CD4-positive, alpha-beta memory T cell (primary cell): ENCODE measurements at regions of chr1 and their contacts with region 1.

Region 1: DNA sequence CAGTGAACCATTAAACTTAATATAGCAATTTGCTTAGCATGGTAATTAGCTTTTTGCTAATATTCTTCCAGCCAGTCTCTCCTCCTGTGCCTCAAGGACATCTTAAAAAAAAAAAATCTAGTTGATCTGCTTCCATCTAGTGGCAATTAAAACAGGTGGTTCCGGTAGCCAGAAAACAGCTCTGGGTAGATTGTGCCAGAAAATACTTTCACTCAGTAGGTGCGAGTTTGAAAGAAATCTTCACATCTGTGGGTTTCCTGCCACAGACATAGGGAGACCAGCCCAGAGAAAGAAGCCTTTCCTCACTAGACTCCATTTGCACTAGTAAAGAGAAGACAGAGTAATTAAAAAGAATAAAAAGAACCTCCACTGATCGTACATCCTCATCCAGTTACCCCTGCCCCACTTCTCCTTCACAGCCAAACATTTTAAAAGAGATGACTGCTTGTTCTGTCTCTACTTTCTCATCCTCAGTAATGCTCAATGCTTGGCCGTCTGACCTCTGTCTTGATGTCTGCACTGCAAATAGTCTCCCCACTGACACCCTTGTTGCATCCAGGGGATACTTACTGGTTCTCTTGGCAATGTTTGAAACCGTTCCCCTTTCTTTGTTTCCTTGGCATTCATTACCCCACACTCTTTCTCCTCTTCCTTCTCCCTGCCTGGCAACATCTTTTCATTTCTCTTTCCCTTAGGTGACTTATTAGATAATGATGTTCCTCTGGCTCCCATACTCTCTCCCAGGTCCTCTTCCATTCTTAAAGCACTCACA is 16.9 kb downstream of the SELL start:
- DNase-seq: peak; percentile 76 to 84 (median 79)
- H3K4me3 ChIP-seq: no peak overlapping the region
- H3K4me3 Mint-ChIP-seq: peak overlapping the region; percentile 55 to 83 (median 68)
- H3K27ac ChIP-seq: peak overlapping the region; percentile 43
- H3K27ac Mint-ChIP-seq: peak overlapping the region in 6 of 7 donors; percentile 90 to 95 (median 92)
- H3K4me1 ChIP-seq: peaks cover 99% of the 10 kb centered on the region
- H3K4me1 Mint-ChIP-seq: peaks cover 81 to 97% (median 88%) of the 10 kb centered on the region in 4 donors
- H3K27me3 ChIP-seq: no peaks in the 10 kb centered on the region
- H3K27me3 Mint-ChIP-seq: no peaks in the 10 kb centered on the region

Region 2: DNA sequence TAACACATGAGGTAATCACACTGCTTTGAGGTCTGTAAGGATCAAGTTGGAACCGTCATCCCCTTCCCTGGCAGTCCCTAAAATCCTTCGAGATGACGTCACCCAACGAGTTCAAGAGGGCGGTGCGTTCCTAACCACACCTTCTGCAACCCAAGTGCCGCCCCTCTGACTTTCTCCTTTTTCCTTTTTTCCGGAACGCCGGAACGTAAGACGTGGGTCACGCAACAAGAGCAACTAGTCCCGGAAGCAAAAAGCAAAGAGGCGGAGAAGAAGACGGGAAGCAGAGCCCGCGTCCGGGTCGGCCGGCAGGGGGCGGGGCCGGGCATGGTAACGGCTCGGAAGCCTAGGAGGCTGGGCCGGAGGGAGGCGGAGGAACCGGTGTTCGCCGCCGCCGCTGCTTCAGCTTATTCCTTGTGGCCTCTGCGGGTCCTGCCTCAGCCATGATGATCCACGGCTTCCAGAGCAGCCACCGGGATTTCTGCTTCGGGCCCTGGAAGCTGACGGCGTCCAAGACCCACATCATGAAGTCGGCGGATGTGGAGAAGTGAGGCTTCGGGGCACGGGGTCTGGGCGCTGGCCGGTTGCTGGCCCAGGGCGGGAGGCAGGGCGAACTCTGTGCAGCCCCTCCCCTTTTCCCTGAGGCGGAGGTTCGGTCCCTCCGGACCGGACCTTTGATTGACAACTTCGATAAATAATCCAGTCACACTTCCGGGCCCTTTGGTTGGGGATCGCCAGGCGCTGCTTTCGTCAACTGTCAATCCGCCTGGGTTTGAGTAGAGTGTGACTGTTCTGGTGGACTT is 1515.7 kb before region 1 on chr1 and contains the start of gene TIPRL:
- CTCF ChIA-PET with region 1: no interaction called
- POLR2A ChIA-PET with region 1: no interaction called
- intact Hi-C with region 1: loop called (anchors 10 kb)
- DNase-seq: peak; percentile 93 to 94 (median 94)
- H3K4me3 ChIP-seq: peak within 1 kb of the TSS; percentile 86 to 99
- H3K4me3 Mint-ChIP-seq: peak within 1 kb of the TSS in 2 of 8 donors; percentile 18 to 26
- H3K27ac ChIP-seq: peak within 1 kb of the TSS; percentile 95
- H3K27ac Mint-ChIP-seq: no peak within 1 kb of the TSS
- H3K4me1 ChIP-seq: peaks cover 24% of the 10 kb centered on the region
- H3K4me1 Mint-ChIP-seq: peaks cover 3 to 17% (median 9%) of the 10 kb centered on the region in 4 donors
- H3K27me3 ChIP-seq: no peaks in the 10 kb centered on the region
- H3K27me3 Mint-ChIP-seq: no peaks in the 10 kb centered on the region
- total RNA-seq, gene TIPRL: 23.8 to 28.3 TPM

Region 3: GRCh38 chr1:169271098-169271497 is 423.4 kb before region 1 on chr1:
- CTCF ChIA-PET with region 1: no interaction called
- POLR2A ChIA-PET with region 1: no interaction called
- intact Hi-C with region 1: no loop called
- DNase-seq: no peak
- H3K4me3 ChIP-seq: no peak overlapping the region
- H3K4me3 Mint-ChIP-seq: no peak overlapping the region
- H3K27ac ChIP-seq: no peak overlapping the region
- H3K27ac Mint-ChIP-seq: no peak overlapping the region
- H3K4me1 ChIP-seq: no peaks in the 10 kb centered on the region
- H3K4me1 Mint-ChIP-seq: no peaks in the 10 kb centered on the region
- H3K27me3 ChIP-seq: no peaks in the 10 kb centered on the region
- H3K27me3 Mint-ChIP-seq: no peaks in the 10 kb centered on the region

Region 4: DNA sequence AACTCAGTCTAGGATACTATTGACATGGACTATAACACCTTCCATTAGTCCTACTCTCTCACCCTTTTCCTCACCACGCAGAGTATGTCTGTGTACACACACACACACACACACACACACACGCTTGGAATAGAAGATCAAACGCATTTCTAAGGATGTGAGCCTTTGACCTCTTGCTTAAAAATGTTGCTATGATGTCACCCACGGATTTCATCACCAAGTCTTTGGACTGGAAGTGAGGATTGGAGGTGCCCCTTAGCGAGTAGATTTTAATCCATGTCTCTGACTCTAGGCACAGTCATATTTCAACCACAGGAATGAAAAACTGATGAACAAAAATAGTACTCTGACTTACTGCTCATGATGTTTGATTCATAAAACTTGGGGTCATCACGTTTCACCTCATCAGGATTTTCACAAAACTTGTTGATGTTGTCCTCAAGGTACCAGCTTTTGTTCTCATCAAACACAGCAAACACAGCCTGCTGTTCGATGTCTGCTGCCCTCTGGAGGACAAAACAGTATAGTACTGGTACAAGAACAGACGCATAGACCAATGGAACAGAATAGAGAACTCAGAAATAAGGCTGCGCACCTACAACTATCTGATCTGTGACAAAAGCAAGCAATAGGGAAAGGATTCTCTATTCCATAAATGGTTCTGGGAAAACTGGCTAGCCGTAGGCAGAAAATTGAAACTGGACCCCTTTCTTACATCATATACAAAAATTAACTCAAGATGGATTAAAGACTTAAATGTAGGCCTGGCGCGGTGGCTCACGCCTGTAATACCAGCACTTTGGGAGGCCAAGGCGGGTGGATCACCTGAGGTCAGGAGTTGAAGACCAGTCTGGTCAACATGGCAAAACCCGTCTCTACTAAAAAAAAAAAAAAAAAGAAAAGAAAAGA is 148.1 kb before region 1 on chr1:
- CTCF ChIA-PET with region 1: interaction called, 3 read pairs
- POLR2A ChIA-PET with region 1: interaction called, 4 read pairs
- intact Hi-C with region 1: loop called (anchors 5 kb)
- DNase-seq: peak; percentile 65 to 68 (median 66)
- H3K4me3 ChIP-seq: no peak overlapping the region
- H3K4me3 Mint-ChIP-seq: no peak overlapping the region
- H3K27ac ChIP-seq: no peak overlapping the region
- H3K27ac Mint-ChIP-seq: no peak overlapping the region
- H3K4me1 ChIP-seq: no peaks in the 10 kb centered on the region
- H3K4me1 Mint-ChIP-seq: peaks cover 0 to 2% (median under 1%) of the 10 kb centered on the region in 4 donors
- H3K27me3 ChIP-seq: no peaks in the 10 kb centered on the region
- H3K27me3 Mint-ChIP-seq: no peaks in the 10 kb centered on the region

Region 5: DNA sequence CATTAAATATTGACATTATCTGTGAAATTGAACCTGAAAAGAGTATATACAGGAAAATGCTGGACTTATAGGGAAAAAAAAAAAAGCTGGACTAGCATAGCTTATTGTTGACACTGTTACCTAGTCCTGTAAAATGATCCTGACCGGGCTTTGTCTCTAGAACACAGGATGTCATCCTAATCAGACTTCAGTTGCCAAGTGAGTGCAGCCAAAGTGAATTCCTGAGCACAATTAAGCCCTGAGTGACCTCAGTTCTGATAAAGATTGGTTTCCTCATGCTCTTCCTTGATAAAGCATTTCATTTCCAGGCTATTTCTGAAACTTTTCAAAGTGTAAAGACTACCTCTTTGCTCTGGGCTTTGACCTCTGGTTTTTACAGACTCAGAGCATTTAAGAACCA is 84.4 kb before region 1 on chr1:
- CTCF ChIA-PET with region 1: interaction called, 24 read pairs
- POLR2A ChIA-PET with region 1: interaction called, 216 read pairs
- intact Hi-C with region 1: no loop called
- DNase-seq: no peak
- H3K4me3 ChIP-seq: no peak overlapping the region
- H3K4me3 Mint-ChIP-seq: peak overlapping the region in 1 of 8 donors; percentile 26
- H3K27ac ChIP-seq: no peak overlapping the region
- H3K27ac Mint-ChIP-seq: no peak overlapping the region
- H3K4me1 ChIP-seq: peaks cover 18% of the 10 kb centered on the region
- H3K4me1 Mint-ChIP-seq: peaks cover 5 to 23% (median 16%) of the 10 kb centered on the region in 4 donors
- H3K27me3 ChIP-seq: no peaks in the 10 kb centered on the region
- H3K27me3 Mint-ChIP-seq: no peaks in the 10 kb centered on the region

Region 6: DNA sequence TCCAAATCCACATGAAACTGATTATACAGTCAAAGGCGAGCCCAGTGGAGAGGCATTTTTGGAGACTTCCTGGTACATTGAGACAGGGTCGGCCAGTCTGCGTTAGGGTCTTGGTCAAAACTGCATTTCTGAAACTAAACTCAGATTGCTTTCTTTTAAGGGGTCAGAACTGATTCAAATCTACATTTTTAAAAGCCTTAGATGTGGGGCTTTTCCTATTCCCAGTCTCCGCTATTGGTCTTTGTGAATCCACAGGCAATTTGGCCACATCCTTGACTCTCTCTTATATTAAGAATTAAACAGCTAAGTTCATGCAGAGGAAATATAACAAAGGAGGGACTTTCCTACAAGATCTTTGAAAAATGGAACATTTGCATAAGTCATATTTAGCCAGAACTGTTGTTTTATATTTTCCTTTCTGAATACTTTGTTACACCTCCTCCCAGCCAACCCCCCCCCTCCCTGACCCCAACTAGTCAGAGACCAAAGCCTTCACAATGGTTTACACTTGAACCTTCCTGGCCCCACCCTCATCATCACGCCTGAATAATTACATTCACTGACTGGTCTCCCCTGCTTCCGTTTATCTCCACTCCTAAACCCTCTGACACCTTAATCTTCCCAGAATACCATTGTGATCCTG is 14.0 kb before region 1 on chr1:
- CTCF ChIA-PET with region 1: interaction called, 9 read pairs
- POLR2A ChIA-PET with region 1: interaction called, 128 read pairs
- intact Hi-C with region 1: loop called (anchors 2 kb)
- DNase-seq: peak in 1 of 5 donors; percentile 53
- H3K4me3 ChIP-seq: no peak overlapping the region
- H3K4me3 Mint-ChIP-seq: peak overlapping the region; percentile 12 to 78 (median 65)
- H3K27ac ChIP-seq: no peak overlapping the region
- H3K27ac Mint-ChIP-seq: peak overlapping the region; percentile 22 to 90 (median 49)
- H3K4me1 ChIP-seq: peaks cover 62% of the 10 kb centered on the region
- H3K4me1 Mint-ChIP-seq: peaks cover 43 to 61% (median 52%) of the 10 kb centered on the region in 4 donors
- H3K27me3 ChIP-seq: no peaks in the 10 kb centered on the region
- H3K27me3 Mint-ChIP-seq: no peaks in the 10 kb centered on the region

Region 7: GRCh38 chr1:169779980-169780379 is 85.5 kb after region 1 on chr1:
- CTCF ChIA-PET with region 1: no interaction called
- POLR2A ChIA-PET with region 1: no interaction called
- intact Hi-C with region 1: no loop called
- DNase-seq: no peak
- H3K4me3 ChIP-seq: no peak overlapping the region
- H3K4me3 Mint-ChIP-seq: no peak overlapping the region
- H3K27ac ChIP-seq: no peak overlapping the region
- H3K27ac Mint-ChIP-seq: no peak overlapping the region
- H3K4me1 ChIP-seq: no peaks in the 10 kb centered on the region
- H3K4me1 Mint-ChIP-seq: no peaks in the 10 kb centered on the region
- H3K27me3 ChIP-seq: no peaks in the 10 kb centered on the region
- H3K27me3 Mint-ChIP-seq: peaks cover 10 to 12% of the 10 kb centered on the region in 2 donors

Region 8: DNA sequence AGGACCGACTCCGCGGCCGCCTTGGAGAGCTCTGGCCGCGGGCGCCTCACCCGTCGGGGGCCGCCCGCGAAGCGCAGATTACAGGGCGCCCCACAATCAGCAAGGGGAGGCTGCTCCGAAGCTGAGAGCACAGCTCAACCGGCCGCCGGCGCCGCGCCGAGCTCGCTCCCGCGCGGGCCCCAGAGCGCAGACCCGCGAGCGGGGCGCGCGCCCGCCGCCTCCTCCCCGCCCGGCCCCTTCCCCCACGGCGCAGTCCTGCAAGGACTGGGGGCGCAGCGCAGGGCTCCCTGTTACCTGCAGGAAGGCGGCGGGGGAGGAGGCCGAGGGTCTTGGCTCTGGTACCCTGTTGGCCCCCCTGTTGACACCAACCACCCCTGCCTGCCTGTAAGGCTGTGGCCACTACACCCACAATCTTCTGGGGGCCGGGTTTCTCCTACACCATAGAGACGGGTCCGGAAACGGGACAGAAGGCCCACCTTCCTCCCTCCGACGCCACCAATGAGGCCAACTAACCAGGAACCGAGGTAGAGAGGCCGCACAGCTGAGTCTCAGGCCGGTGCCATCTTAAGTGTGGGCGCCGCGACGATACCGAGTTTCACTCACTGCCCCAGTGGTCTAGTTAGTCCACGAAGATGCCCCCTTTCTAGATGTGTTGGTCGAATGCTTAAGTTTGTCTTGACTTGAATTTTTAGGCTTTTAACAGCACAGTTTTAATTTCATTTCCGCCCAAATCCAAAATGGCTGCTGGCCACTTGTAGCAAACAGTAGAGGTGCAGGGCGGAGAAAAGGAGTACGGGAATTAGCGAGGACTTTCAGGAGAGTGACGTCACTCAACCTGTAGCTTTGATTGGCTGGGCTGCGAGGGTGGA is 199.2 kb after region 1 on chr1 and contains the start of gene SCYL3:
- CTCF ChIA-PET with region 1: no interaction called
- POLR2A ChIA-PET with region 1: interaction called, 17 read pairs
- intact Hi-C with region 1: no loop called
- DNase-seq: peak; percentile 96 to 97 (median 96)
- H3K4me3 ChIP-seq: peak within 1 kb of the TSS; percentile 58 to 86
- H3K4me3 Mint-ChIP-seq: peak within 1 kb of the TSS; percentile 92 to 97 (median 94)
- H3K27ac ChIP-seq: peak within 1 kb of the TSS; percentile 98
- H3K27ac Mint-ChIP-seq: peak within 1 kb of the TSS; percentile 97 to 100 (median 100)
- H3K4me1 ChIP-seq: peaks cover 46% of the 10 kb centered on the region
- H3K4me1 Mint-ChIP-seq: peaks cover 35 to 51% (median 43%) of the 10 kb centered on the region in 4 donors
- H3K27me3 ChIP-seq: no peaks in the 10 kb centered on the region
- H3K27me3 Mint-ChIP-seq: peaks cover 0 to 2% of the 10 kb centered on the region in 2 donors
- total RNA-seq, gene SCYL3: 23.5 to 24.3 TPM